Activated CD8-positive, alpha-beta T cell treated with anti-CD3 and anti-CD28 coated beads for 36 hours (primary cell): ENCODE measurements at regions of chr5 and their contacts with region 1.

Region 1: DNA sequence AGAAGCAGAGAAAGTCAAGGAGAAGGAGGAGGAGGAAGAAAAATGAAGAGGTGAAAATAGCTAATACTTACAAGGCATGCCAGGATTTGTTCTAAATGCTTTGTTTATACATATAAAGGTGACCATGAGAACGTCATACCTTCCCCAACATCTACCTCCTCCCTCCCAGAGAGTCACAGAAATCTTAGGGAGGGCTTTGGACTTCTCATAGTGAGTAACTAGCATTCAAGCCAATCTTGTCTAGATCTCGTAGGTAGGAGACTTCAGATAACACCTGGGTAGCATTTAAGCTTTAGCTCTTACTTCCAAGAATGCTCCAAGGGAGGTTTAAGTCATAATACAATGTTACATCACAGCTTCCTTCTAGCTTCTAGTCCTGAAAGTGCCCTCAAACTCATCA is 36.5 kb upstream of the GPBP1 start:
- DNase-seq: no peak
- ATAC-seq: no peak
- H3K4me3 Mint-ChIP-seq: no peak overlapping the region
- H3K27ac Mint-ChIP-seq: no peak overlapping the region
- H3K4me1 Mint-ChIP-seq: no peaks in the 10 kb centered on the region
- H3K27me3 Mint-ChIP-seq: peaks cover 5% of the 10 kb centered on the region
- CTCF ChIP-seq: no peak

Region 2: DNA sequence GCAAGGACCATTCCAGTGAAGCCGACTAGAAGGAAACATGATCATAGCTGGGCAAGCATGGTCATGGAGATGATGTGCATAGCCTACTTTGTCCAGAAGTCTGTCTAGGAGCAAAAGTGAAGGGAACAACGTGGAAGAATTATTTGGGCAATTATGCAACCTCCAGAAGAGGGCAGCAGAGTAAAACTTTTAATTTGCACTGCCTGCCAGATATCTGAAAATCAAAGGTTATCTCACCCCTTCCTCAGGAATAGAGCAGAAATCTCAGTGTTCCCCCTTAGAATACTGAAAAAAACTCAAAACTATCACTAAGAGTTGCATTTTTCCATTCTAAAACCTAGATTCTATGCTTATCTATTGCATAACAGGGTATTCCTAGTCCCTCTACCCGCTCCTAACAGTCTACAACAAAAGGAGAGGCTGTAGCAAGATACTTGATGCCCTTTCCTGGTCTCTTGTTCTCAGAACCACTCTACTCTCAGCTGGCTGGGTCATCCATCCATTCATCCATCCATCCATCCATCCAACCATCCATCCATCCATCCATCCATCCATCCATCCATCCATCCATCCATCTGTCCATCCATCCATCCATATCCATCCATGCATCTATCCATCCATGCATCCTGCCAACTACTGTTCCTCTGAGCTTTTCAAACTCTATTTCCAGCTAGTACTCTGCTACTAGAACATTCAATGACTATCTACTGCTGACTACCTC is 236.4 kb before region 1 on chr5:
- CTCF ChIA-PET with region 1: interaction called, 18 read pairs
- POLR2A ChIA-PET with region 1: no interaction called
- intact Hi-C with region 1: loop called (anchors 5 kb)
- DNase-seq: peak; percentile 35
- ATAC-seq: peak; percentile 61
- H3K4me3 Mint-ChIP-seq: no peak overlapping the region
- H3K27ac Mint-ChIP-seq: no peak overlapping the region
- H3K4me1 Mint-ChIP-seq: peaks cover 4% of the 10 kb centered on the region
- H3K27me3 Mint-ChIP-seq: no peaks in the 10 kb centered on the region
- CTCF ChIP-seq: peak; percentile 82

Region 3: GRCh38 chr5:56909294-56910209 is 227.8 kb before region 1 on chr5 and contains the start of gene SETD9:
- CTCF ChIA-PET with region 1: interaction called, 13 read pairs
- POLR2A ChIA-PET with region 1: no interaction called
- intact Hi-C with region 1: loop called (anchors 5 kb)
- DNase-seq: peak; percentile 97
- ATAC-seq: peak; percentile 93
- H3K4me3 Mint-ChIP-seq: peak within 1 kb of the TSS; percentile 82
- H3K27ac Mint-ChIP-seq: peak within 1 kb of the TSS; percentile 97
- H3K4me1 Mint-ChIP-seq: peaks cover 19% of the 10 kb centered on the region
- H3K27me3 Mint-ChIP-seq: peaks cover 3% of the 10 kb centered on the region
- CTCF ChIP-seq: no peak
- total RNA-seq, gene SETD9: 8.1 to 9.3 TPM

Region 4: DNA sequence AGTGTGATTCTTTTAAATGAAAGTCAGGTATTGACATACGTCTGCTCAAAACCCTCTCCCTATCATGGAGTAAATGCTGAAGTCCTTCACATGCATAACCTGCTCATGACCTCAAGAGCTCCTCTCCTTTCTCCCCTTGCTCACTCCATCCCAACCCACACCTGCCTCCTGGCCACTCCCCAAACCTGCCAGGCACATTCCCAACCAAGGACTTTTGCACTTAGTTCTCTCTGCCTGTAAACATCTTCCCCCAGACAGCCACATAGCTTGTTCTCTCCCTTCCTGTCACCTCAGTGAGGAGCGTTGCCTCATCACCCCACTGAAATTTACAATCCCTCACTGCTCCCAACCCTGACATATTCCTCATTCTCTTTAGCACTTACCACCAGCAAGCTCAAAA is 219.3 kb before region 1 on chr5:
- CTCF ChIA-PET with region 1: interaction called, 12 read pairs
- POLR2A ChIA-PET with region 1: no interaction called
- intact Hi-C with region 1: no loop called
- DNase-seq: no peak
- ATAC-seq: no peak
- H3K4me3 Mint-ChIP-seq: no peak overlapping the region
- H3K27ac Mint-ChIP-seq: no peak overlapping the region
- H3K4me1 Mint-ChIP-seq: no peaks in the 10 kb centered on the region
- H3K27me3 Mint-ChIP-seq: no peaks in the 10 kb centered on the region
- CTCF ChIP-seq: no peak

Region 5: GRCh38 chr5:56950626-56951125 is 186.7 kb before region 1 on chr5:
- CTCF ChIA-PET with region 1: interaction called, 16 read pairs
- POLR2A ChIA-PET with region 1: no interaction called
- intact Hi-C with region 1: no loop called
- DNase-seq: peak; percentile 66
- ATAC-seq: peak; percentile 60
- H3K4me3 Mint-ChIP-seq: peak overlapping the region; percentile 84
- H3K27ac Mint-ChIP-seq: peak overlapping the region; percentile 73
- H3K4me1 Mint-ChIP-seq: peaks cover 18% of the 10 kb centered on the region
- H3K27me3 Mint-ChIP-seq: peaks cover 18% of the 10 kb centered on the region
- CTCF ChIP-seq: no peak

Region 6: GRCh38 chr5:57028161-57028560 is 109.2 kb before region 1 on chr5:
- CTCF ChIA-PET with region 1: no interaction called
- POLR2A ChIA-PET with region 1: no interaction called
- intact Hi-C with region 1: no loop called
- DNase-seq: no peak
- ATAC-seq: no peak
- H3K4me3 Mint-ChIP-seq: no peak overlapping the region
- H3K27ac Mint-ChIP-seq: no peak overlapping the region
- H3K4me1 Mint-ChIP-seq: peaks cover 10% of the 10 kb centered on the region
- H3K27me3 Mint-ChIP-seq: peaks cover 2% of the 10 kb centered on the region
- CTCF ChIP-seq: no peak

Region 7: DNA sequence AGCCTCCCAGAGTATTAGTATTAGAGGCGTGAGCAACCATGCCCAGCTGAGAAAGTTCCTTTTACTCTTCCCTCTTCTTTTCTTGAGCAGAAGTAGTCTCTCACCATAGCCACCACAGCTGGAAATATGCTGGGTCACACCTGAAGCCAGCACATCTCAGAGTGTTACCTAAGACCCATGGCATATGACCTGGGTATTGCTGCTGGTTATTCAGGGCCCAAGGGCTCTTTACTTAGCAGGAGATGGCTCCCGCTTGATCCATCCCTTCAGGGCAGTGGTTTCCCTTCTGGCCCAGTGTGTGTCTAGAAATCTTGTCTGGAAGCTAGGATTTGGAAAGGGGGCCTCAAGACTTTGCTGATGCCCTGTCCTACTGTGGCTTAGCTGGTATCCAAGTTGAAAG is 13.3 kb after region 1 on chr5:
- CTCF ChIA-PET with region 1: interaction called, 14 read pairs
- POLR2A ChIA-PET with region 1: no interaction called
- intact Hi-C with region 1: no loop called
- DNase-seq: no peak
- ATAC-seq: no peak
- H3K4me3 Mint-ChIP-seq: no peak overlapping the region
- H3K27ac Mint-ChIP-seq: no peak overlapping the region
- H3K4me1 Mint-ChIP-seq: no peaks in the 10 kb centered on the region
- H3K27me3 Mint-ChIP-seq: peaks cover 5% of the 10 kb centered on the region
- CTCF ChIP-seq: no peak

Region 8: DNA sequence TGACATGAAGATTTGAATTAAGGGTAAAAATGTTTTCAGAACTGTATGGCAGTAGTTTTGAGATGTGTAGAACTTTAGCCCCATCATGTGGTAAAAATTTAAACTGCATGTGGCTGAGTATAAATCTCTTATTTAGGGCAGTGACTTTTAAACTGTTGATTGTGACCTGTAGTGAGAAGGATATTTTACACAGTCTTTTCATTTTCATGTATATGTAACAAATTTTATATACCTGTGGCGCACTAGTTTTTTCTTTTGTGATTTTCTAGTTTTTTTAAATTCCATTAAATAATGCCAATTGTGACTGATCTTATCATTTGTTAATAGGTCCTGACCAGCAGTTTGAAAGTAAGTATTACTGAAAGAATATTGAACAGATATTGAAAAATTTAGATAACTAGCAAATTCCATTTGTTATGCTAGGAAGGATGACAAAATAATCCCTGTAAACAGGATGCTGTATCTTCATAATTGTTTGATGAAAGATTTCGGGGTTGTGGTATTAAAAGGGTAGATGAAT is 83.7 kb after region 1 on chr5:
- CTCF ChIA-PET with region 1: interaction called, 14 read pairs
- POLR2A ChIA-PET with region 1: no interaction called
- intact Hi-C with region 1: no loop called
- DNase-seq: no peak
- ATAC-seq: peak; percentile 79
- H3K4me3 Mint-ChIP-seq: no peak overlapping the region
- H3K27ac Mint-ChIP-seq: peak overlapping the region; percentile 67
- H3K4me1 Mint-ChIP-seq: peaks cover 49% of the 10 kb centered on the region
- H3K27me3 Mint-ChIP-seq: no peaks in the 10 kb centered on the region
- CTCF ChIP-seq: peak; percentile 96

Region 9: GRCh38 chr5:57277085-57277484 is 139.7 kb after region 1 on chr5:
- CTCF ChIA-PET with region 1: no interaction called
- POLR2A ChIA-PET with region 1: no interaction called
- intact Hi-C with region 1: no loop called
- DNase-seq: no peak
- ATAC-seq: no peak
- H3K4me3 Mint-ChIP-seq: no peak overlapping the region
- H3K27ac Mint-ChIP-seq: no peak overlapping the region
- H3K4me1 Mint-ChIP-seq: peaks cover 3% of the 10 kb centered on the region
- H3K27me3 Mint-ChIP-seq: peaks cover 3% of the 10 kb centered on the region
- CTCF ChIP-seq: peak; percentile 45

Region 10: DNA sequence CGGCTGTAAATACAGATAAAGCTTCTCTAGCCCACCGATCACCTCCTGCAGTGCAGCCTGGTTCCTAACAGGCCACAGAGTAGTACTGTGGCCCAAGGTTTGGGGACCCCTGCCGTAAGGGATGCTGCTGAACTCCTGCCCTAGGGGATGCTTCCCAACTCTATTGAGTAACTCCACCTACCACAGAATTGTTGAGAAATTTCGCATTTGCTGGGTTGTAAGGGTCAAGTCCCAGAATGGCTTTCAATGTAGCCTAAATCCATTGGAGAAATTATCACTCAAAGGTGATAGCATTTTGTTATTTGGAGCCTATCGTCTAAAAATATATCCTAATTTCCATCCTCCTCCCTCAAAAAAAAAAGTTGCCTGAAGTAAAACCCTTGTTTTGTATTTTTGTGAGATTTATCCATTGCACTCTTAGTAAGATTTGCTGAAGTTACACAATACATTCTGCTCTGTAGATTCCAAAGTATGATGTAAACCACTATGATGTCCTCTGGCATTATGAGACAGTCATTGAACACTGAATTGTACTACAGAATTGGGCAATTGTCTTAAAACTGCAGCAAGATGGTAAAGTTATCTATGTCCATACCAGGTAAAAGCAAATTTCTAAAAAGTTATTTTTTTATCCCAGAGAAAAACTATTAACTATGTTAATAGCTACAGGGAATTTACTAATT is 331.2 kb after region 1 on chr5:
- CTCF ChIA-PET with region 1: no interaction called
- POLR2A ChIA-PET with region 1: no interaction called
- intact Hi-C with region 1: no loop called
- DNase-seq: no peak
- ATAC-seq: no peak
- H3K4me3 Mint-ChIP-seq: no peak overlapping the region
- H3K27ac Mint-ChIP-seq: no peak overlapping the region
- H3K4me1 Mint-ChIP-seq: no peaks in the 10 kb centered on the region
- H3K27me3 Mint-ChIP-seq: peaks cover 2% of the 10 kb centered on the region
- CTCF ChIP-seq: no peak

Region 11: GRCh38 chr5:57499262-57500050 is 362.1 kb after region 1 on chr5:
- CTCF ChIA-PET with region 1: no interaction called
- POLR2A ChIA-PET with region 1: no interaction called
- intact Hi-C with region 1: no loop called
- DNase-seq: peak; percentile 16
- ATAC-seq: peak; percentile 46
- H3K4me3 Mint-ChIP-seq: no peak overlapping the region
- H3K27ac Mint-ChIP-seq: no peak overlapping the region
- H3K4me1 Mint-ChIP-seq: peaks cover 21% of the 10 kb centered on the region
- H3K27me3 Mint-ChIP-seq: no peaks in the 10 kb centered on the region
- CTCF ChIP-seq: peak; percentile 66